Activated CD4-positive, alpha-beta T cell treated with anti-CD3 and anti-CD28 coated beads for 36 hours (primary cell): ENCODE measurements at regions of chr15 and their contacts with region 1.

Region 1: GRCh38 chr15:96225320-96226259 is 104.9 kb upstream of the NR2F2 start:
- DNase-seq: no peak
- ATAC-seq: no peak
- H3K4me3 Mint-ChIP-seq: no peak overlapping the region
- H3K27ac Mint-ChIP-seq: no peak overlapping the region
- H3K4me1 Mint-ChIP-seq: no peaks in the 10 kb centered on the region
- H3K27me3 Mint-ChIP-seq: peaks cover 4% of the 10 kb centered on the region

Region 2: GRCh38 chr15:94951538-94951937 is 1274.1 kb before region 1 on chr15:
- CTCF ChIA-PET with region 1: no interaction called
- POLR2A ChIA-PET with region 1: no interaction called
- intact Hi-C with region 1: loop called in 1 of 2 experiments (anchors 5 kb)
- DNase-seq: no peak
- ATAC-seq: no peak
- H3K4me3 Mint-ChIP-seq: no peak overlapping the region
- H3K27ac Mint-ChIP-seq: no peak overlapping the region
- H3K4me1 Mint-ChIP-seq: no peaks in the 10 kb centered on the region
- H3K27me3 Mint-ChIP-seq: peaks cover 2% of the 10 kb centered on the region